PC-9 (cell line): ENCODE measurements at regions of chr16 and their contacts with region 1.

Region 1: GRCh38 chr16:9099131-9099625 is 7.7 kb downstream of the HAPSTR1 start:
- DNase-seq: peak in 1 of 2 experiments; percentile 70
- H3K4me3 ChIP-seq: 0 out of 2 replicates have a peak overlapping the region, but pooled peaks have one; percentile 5
- H3K27ac ChIP-seq: peak overlapping the region; percentile 62
- H3K4me1 ChIP-seq: peaks cover 89% of the 10 kb centered on the region
- H3K27me3 ChIP-seq: no peaks in the 10 kb centered on the region
- CTCF ChIP-seq: no peak

Region 2: GRCh38 chr16:9112166-9112843 is 13.1 kb after region 1 on chr16:
- CTCF ChIA-PET with region 1: no interaction called
- POLR2A ChIA-PET with region 1: interaction called, 5 read pairs
- intact Hi-C with region 1: loop called (anchors 1 kb)
- DNase-seq: no peak
- H3K4me3 ChIP-seq: no peak overlapping the region
- H3K27ac ChIP-seq: peak overlapping the region; percentile 89
- H3K4me1 ChIP-seq: peaks cover 78% of the 10 kb centered on the region
- H3K27me3 ChIP-seq: no peaks in the 10 kb centered on the region
- CTCF ChIP-seq: no peak

Region 3: GRCh38 chr16:9176547-9177418 is 77.6 kb after region 1 on chr16:
- CTCF ChIA-PET with region 1: no interaction called
- POLR2A ChIA-PET with region 1: no interaction called
- intact Hi-C with region 1: no loop called
- DNase-seq: no peak
- H3K4me3 ChIP-seq: no peak overlapping the region
- H3K27ac ChIP-seq: no peak overlapping the region
- H3K4me1 ChIP-seq: no peaks in the 10 kb centered on the region
- H3K27me3 ChIP-seq: peaks cover 76% of the 10 kb centered on the region
- CTCF ChIP-seq: no peak